Activated CD8-positive, alpha-beta memory T cell treated with anti-CD3 and anti-CD28 coated beads, Interleukin-2, amount 10 ng/mL, durations not matched to agents 7 days and 5 days (primary cell): ENCODE measurements at regions of chr6 and their contacts with region 1.

Region 1: DNA sequence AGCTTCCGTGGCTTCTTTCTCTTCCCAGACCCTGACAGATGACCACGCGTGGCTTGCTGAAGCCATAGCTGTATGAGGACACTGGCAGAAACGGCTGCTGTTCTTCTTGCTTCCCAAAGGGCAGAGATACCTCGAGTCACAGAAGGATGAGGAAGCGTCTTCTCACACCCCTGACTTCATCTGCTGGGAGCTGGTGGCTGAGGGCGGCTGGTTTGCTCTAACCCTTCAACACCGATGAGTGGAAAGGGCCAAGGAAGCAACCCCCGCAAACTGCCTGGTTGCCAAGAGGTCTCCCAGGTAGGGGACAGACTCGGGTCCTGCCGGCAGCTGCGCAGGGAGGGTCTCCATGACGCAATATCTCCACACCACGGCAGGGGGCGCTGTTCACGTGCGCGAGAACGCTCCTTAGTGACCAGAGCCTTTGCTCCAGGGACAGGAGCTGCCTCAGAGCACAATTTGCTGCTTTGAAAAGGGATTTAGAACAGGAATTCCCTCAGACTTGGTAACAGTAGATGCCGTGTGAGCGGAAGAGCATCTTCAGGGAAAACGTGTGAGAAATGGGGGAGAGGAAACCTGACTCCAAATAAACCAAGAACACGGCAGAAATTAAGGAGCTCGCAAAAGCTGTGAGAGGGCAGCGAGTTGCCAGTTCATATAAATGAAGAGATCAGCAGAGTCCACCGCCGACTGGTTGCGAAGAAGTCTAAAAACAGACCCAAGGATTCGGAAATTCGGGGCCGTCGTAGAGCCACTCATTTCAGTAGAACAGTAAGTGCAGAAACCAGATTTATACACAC is 80.2 kb downstream of the ERMARD start:
- DNase-seq: peak; percentile 71
- ATAC-seq: peak; percentile 69
- H3K4me3 Mint-ChIP-seq: no peak overlapping the region
- H3K27ac Mint-ChIP-seq: no peak overlapping the region
- H3K4me1 Mint-ChIP-seq: peaks cover 2% of the 10 kb centered on the region
- H3K27me3 Mint-ChIP-seq: peaks cover 57% of the 10 kb centered on the region

Region 2: GRCh38 chr6:169789982-169790927 is 41.4 kb before region 1 on chr6:
- CTCF ChIA-PET with region 1: interaction called, 13 read pairs
- DNase-seq: peak; percentile 79
- ATAC-seq: peak; percentile 98
- H3K4me3 Mint-ChIP-seq: peak overlapping the region; percentile 67
- H3K27ac Mint-ChIP-seq: no peak overlapping the region
- H3K4me1 Mint-ChIP-seq: peaks cover 15% of the 10 kb centered on the region
- H3K27me3 Mint-ChIP-seq: peaks cover 53% of the 10 kb centered on the region

Region 3: GRCh38 chr6:169800668-169801395 is 30.8 kb before region 1 on chr6:
- CTCF ChIA-PET with region 1: interaction called, 16 read pairs
- DNase-seq: peak; percentile 30
- ATAC-seq: no peak
- H3K4me3 Mint-ChIP-seq: no peak overlapping the region
- H3K27ac Mint-ChIP-seq: no peak overlapping the region
- H3K4me1 Mint-ChIP-seq: peaks cover 34% of the 10 kb centered on the region
- H3K27me3 Mint-ChIP-seq: peaks cover 76% of the 10 kb centered on the region

Region 4: DNA sequence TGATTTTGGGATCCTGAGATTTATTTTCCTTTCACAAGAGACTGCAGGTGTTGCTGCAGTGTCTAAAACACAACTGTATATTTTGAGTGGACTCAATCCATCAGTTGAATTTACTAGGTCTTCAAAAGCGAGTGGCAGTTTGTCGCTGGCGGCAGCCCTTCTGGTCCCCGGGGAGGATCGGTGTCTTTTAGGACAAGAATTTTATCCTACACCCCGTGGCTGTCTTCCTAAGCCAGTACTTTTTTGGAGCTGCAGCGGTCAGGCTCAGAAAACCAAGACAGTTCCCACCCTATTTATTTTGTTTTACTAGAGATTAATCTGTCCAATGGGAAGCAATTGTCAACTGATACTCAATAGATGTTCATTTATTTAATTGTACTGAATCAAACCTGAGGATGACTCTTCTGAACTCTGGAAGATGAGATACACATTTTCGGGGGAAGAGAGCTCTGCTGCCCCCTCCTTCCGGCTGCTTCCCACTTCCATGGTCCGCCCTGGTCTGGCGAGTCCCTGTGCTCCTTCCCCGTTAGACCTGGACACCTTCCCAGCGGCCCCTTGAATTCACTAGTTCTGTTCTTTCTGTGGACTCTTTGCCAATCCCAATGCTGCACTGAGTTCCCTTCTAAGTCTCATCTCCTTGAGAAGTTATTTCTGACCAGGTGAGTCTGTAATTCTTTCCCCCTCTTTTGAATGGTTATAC is 10.4 kb after region 1 on chr6:
- CTCF ChIA-PET with region 1: interaction called, 13 read pairs
- DNase-seq: peak; percentile 23
- ATAC-seq: no peak
- H3K4me3 Mint-ChIP-seq: no peak overlapping the region
- H3K27ac Mint-ChIP-seq: no peak overlapping the region
- H3K4me1 Mint-ChIP-seq: no peaks in the 10 kb centered on the region
- H3K27me3 Mint-ChIP-seq: peaks cover 13% of the 10 kb centered on the region

Region 5: GRCh38 chr6:169930799-169931198 is 99.2 kb after region 1 on chr6:
- CTCF ChIA-PET with region 1: interaction called, 12 read pairs
- DNase-seq: no peak
- ATAC-seq: no peak
- H3K4me3 Mint-ChIP-seq: no peak overlapping the region
- H3K27ac Mint-ChIP-seq: no peak overlapping the region
- H3K4me1 Mint-ChIP-seq: no peaks in the 10 kb centered on the region
- H3K27me3 Mint-ChIP-seq: peaks cover 17% of the 10 kb centered on the region

Region 6: DNA sequence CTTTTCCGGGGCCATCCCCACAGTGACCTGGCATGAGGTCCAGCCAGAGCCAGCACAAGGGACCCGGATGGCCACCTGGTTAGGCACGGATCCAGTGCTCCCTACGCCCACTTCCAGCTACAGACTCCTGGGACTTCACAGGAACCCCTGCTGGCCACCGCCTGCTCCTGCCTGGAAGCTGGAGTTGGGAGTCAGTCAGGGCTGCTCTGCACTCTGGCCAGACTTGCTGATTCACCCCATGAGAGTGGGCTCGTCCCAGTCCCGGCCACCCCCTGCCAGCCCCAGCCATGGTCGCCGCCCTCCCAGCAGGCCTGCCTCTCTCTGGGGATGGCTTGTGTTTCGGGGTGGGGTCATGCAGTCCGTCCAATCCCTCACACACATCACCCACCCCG is 333.4 kb after region 1 on chr6:
- CTCF ChIA-PET with region 1: no interaction called
- DNase-seq: no peak
- ATAC-seq: no peak
- H3K4me3 Mint-ChIP-seq: no peak overlapping the region
- H3K27ac Mint-ChIP-seq: no peak overlapping the region
- H3K4me1 Mint-ChIP-seq: no peaks in the 10 kb centered on the region
- H3K27me3 Mint-ChIP-seq: no peaks in the 10 kb centered on the region

Region 7: DNA sequence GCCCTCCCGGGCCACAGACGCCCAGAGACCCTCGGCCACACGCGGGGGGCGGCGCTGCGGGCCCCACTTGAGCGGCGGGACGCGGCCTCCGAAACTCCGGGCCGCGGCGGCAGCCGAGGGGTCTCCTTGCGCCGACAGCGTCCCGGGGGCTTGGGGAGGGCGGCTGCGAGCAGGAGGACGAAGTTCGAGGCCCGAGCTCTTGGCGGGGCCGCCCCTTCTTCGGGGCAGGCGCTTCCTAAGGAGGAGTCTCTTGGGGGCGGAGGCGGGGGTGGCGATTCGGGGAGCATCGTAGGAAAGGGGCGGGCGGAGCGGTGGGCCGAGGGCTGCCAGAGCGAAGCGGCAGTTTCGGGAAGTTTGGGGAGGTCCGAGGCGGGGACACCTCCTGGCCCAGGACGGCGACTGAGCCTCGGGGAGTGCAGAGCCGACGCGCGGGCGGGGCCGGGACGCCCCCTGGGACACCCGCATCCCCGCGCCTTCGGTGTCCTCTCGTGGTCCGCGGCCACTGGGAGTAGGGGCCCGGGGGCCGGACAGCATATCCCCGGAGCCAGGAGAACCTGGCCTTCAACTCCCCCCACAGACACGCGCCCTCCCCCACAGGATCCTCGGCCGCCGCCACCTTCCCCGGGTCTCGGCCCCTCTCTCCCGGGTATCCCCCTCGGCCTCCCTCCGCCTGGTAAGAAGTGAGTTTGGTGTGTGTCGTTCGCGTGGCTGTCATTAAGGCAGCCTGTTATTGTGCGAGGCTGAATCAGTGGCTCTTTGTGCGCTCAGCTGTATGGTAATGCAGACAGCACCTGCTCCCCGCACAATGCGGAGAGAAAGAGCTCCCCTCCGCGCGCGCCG is 459.8 kb after region 1 on chr6:
- CTCF ChIA-PET with region 1: interaction called, 18 read pairs
- DNase-seq: no peak
- ATAC-seq: peak; percentile 37
- H3K4me3 Mint-ChIP-seq: peak overlapping the region; percentile 62
- H3K27ac Mint-ChIP-seq: no peak overlapping the region
- H3K4me1 Mint-ChIP-seq: peaks cover 32% of the 10 kb centered on the region
- H3K27me3 Mint-ChIP-seq: peaks cover 76% of the 10 kb centered on the region

Region 8: GRCh38 chr6:170516783-170517616 is 685.4 kb after region 1 on chr6:
- CTCF ChIA-PET with region 1: interaction called, 27 read pairs
- DNase-seq: peak; percentile 61
- ATAC-seq: peak; percentile 89
- H3K4me3 Mint-ChIP-seq: peak overlapping the region; percentile 20
- H3K27ac Mint-ChIP-seq: no peak overlapping the region
- H3K4me1 Mint-ChIP-seq: peaks cover 9% of the 10 kb centered on the region
- H3K27me3 Mint-ChIP-seq: peaks cover 75% of the 10 kb centered on the region